ENCODE measurements at regions of chr7 and their contacts with region 1.

Region 1: DNA sequence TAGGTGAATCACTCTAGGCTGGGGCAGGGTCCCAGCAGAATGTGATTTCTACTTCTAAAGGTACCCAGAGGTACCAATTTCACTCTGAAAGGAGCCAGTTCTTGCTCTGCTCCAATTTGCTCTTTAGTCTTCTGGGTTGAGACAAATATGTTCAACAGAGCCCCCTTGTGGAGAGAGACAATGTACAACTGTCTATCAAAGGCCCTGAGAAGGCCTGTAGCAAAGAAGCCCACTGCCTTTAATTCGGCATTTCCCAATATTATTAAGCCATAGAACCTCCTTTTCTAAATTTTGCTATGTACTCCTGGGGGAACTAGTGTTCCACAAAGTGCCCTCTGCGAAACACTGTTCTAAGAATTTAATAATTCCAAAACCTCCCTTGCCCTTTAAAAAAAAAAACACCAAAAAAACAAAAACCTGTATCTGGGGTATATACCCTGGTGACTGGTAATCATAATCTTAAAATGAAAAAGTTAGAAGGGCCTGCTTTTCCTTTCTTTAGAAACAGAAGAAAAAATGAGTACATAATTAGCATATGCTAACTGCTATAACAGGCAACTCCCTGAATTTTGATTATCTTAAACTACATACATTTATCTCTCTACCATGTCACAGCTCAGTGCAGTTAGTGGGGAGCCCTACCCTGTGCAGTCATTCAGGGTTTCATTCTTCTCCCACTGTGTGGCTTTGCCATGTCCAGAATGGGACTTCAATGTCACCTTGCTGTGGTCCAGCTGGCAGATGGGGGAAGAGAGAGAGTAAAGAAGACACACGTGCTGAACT is 160.9 kb upstream of the BMPER start:
- DNase-seq: no peak
- H3K4me3 Mint-ChIP-seq: no peak overlapping the region
- H3K27ac Mint-ChIP-seq: no peak overlapping the region
- H3K4me1 Mint-ChIP-seq: no peaks in the 10 kb centered on the region
- H3K27me3 Mint-ChIP-seq: no peaks in the 10 kb centered on the region

Region 2: DNA sequence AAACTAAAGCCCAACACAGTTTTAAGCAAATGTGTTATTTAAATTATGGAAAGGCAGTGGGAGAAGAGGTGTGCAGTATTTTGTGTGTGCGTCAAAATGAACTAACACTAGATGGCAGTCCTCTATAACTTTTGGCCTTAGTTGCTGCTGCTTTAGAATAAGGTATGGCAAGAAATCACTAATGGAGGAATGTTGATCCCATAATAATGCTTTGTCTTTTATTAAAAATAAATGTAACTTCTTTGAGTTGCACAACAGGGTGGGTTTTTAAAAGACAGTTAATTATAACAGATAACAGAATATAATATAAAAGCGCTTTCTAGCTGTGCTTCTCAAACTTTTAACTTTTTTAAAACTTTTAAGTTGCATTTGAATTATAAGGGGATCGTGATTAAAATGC is 558.7 kb before region 1 on chr7:
- CTCF ChIA-PET with region 1: no interaction called
- POLR2A ChIA-PET with region 1: no interaction called
- intact Hi-C with region 1: loop called (anchors 10 kb)
- DNase-seq: no peak
- H3K4me3 Mint-ChIP-seq: no peak overlapping the region
- H3K27ac Mint-ChIP-seq: no peak overlapping the region
- H3K4me1 Mint-ChIP-seq: peaks cover 5% of the 10 kb centered on the region
- H3K27me3 Mint-ChIP-seq: no peaks in the 10 kb centered on the region

Region 3: GRCh38 chr7:33423646-33424020 is 320.9 kb before region 1 on chr7:
- CTCF ChIA-PET with region 1: no interaction called
- POLR2A ChIA-PET with region 1: no interaction called
- intact Hi-C with region 1: loop called (anchors 10 kb)
- DNase-seq: peak; percentile 13
- H3K4me3 Mint-ChIP-seq: no peak overlapping the region
- H3K27ac Mint-ChIP-seq: no peak overlapping the region
- H3K4me1 Mint-ChIP-seq: no peaks in the 10 kb centered on the region
- H3K27me3 Mint-ChIP-seq: no peaks in the 10 kb centered on the region

Measured in activated CD4-positive, alpha-beta memory T cell treated with anti-CD3 and anti-CD28 coated beads for 36 hours (primary cell).